ENCODE measurements at regions of chr3 and their contacts with region 1.

Region 1: GRCh38 chr3:113287803-113288648 is 76.7 kb downstream of the BOC start:
- DNase-seq: peak in 4 of 10 donors; percentile 51 to 76 (median 66)
- H3K4me3 ChIP-seq: no peak overlapping the region
- H3K27ac ChIP-seq: peak overlapping the region in 26 of 59 donors; percentile 3 to 70 (median 42)
- H3K27me3 ChIP-seq: no peaks in the 10 kb centered on the region
- CTCF ChIP-seq: peak; percentile 92 to 100 (median 98)

Region 2: GRCh38 chr3:113051302-113051711 is 236.7 kb before region 1 on chr3:
- intact Hi-C with region 1: loop called (anchors 1 to 2 kb)
- DNase-seq: peak; percentile 72 to 97 (median 87)
- H3K4me3 ChIP-seq: peak overlapping the region in 48 of 59 donors; percentile 0 to 55 (median 30)
- H3K27ac ChIP-seq: peak overlapping the region in 48 of 59 donors; percentile 0 to 81 (median 58)
- H3K27me3 ChIP-seq: no peaks in the 10 kb centered on the region
- CTCF ChIP-seq: peak; percentile 94 to 100 (median 98)

Region 3: GRCh38 chr3:113136071-113136470 is 152.0 kb before region 1 on chr3:
- intact Hi-C with region 1: loop called in 1 of 2 experiments (anchors 10 kb)
- DNase-seq: no peak
- H3K4me3 ChIP-seq: no peak overlapping the region
- H3K27ac ChIP-seq: no peak overlapping the region
- H3K27me3 ChIP-seq: no peaks in the 10 kb centered on the region
- CTCF ChIP-seq: peak in 55 of 56 donors; percentile 17 to 71 (median 41)

Region 4: GRCh38 chr3:113304856-113305540 is 17.0 kb after region 1 on chr3:
- intact Hi-C with region 1: no loop called
- DNase-seq: no peak
- H3K4me3 ChIP-seq: no peak overlapping the region
- H3K27ac ChIP-seq: no peak overlapping the region
- H3K27me3 ChIP-seq: no peaks in the 10 kb centered on the region
- CTCF ChIP-seq: no peak

Region 5: DNA sequence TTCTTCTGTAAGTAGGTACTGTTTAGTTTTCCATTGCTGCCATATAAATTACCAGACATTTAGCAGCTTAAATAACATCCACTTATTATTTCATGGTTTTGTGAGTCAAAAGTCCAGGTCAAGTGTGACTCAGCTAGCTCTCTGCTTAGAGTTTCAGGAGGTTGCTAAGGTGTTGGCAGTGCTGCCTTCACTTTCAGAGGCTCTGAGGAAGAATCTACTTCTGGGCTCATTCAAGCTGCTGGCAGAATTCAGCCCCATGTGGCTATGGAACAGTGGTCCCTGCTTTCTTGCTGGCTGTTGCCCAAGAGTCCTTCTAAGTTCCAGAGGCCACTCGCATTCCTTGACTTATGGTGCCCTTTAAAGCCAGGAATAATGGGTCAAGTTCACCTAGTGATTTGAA is 148.8 kb after region 1 on chr3:
- intact Hi-C with region 1: no loop called
- DNase-seq: no peak
- H3K4me3 ChIP-seq: no peak overlapping the region
- H3K27ac ChIP-seq: no peak overlapping the region
- H3K27me3 ChIP-seq: no peaks in the 10 kb centered on the region
- CTCF ChIP-seq: no peak